Activated T-helper 2 cell treated with anti-CD3 and anti-CD28 coated beads, Interferon-gamma antibody, Interleukin-2, Interleukin-4, amounts not matched to agents 10 μg/mL and 5 μg/mL and 100 μg/mL, durations not matched to agents 14 hours and 24 hours and 36 hours (primary cell): ENCODE measurements at regions of chr17 and their contacts with region 1.

Region 1: GRCh38 chr17:35373534-35373983 is at the start of gene SLFN11:
- DNase-seq: peak; percentile 81
- H3K4me3 Mint-ChIP-seq: peak within 1 kb of the TSS; percentile 96
- H3K27ac Mint-ChIP-seq: peak within 1 kb of the TSS; percentile 96
- H3K4me1 Mint-ChIP-seq: peaks cover 56% of the 10 kb centered on the region
- H3K27me3 Mint-ChIP-seq: peaks cover 3% of the 10 kb centered on the region
- total RNA-seq, gene SLFN11: 112 and 114 TPM in 2 replicates

Region 2: GRCh38 chr17:35432176-35433074 is 58.9 kb after region 1 on chr17 and contains the start of gene SLFN12:
- intact Hi-C with region 1: loop called (anchors 2 kb)
- DNase-seq: peak; percentile 34
- H3K4me3 Mint-ChIP-seq: peak within 1 kb of the TSS; percentile 90
- H3K27ac Mint-ChIP-seq: peak within 1 kb of the TSS; percentile 94
- H3K4me1 Mint-ChIP-seq: peaks cover 51% of the 10 kb centered on the region
- H3K27me3 Mint-ChIP-seq: no peaks in the 10 kb centered on the region
- total RNA-seq, gene SLFN12: 7.5 and 8.8 TPM in 2 replicates

Region 3: GRCh38 chr17:35448214-35448898 is 74.8 kb after region 1 on chr17 and contains the start of gene SLFN13:
- intact Hi-C with region 1: loop called (anchors 1 kb)
- DNase-seq: peak; percentile 83
- H3K4me3 Mint-ChIP-seq: peak within 1 kb of the TSS; percentile 65
- H3K27ac Mint-ChIP-seq: peak within 1 kb of the TSS; percentile 79
- H3K4me1 Mint-ChIP-seq: peaks cover 16% of the 10 kb centered on the region
- H3K27me3 Mint-ChIP-seq: no peaks in the 10 kb centered on the region
- total RNA-seq, gene SLFN13: 41.9 and 42.6 TPM in 2 replicates